IMR-90 (cell line): ENCODE measurements at regions of chr3 and their contacts with region 1.

Region 1: GRCh38 chr3:127002195-127003174 is 19.6 kb downstream of the PLXNA1 start:
- DNase-seq: peak; percentile 89
- ATAC-seq: peak; percentile 92
- H3K4me3 ChIP-seq: no peak overlapping the region
- H3K27ac ChIP-seq: peak overlapping the region; percentile 99
- H3K4me1 ChIP-seq: peaks cover 29% of the 10 kb centered on the region
- H3K27me3 ChIP-seq: no peaks in the 10 kb centered on the region
- CTCF ChIP-seq: peak; percentile 69
- POLR2A ChIP-seq: 0 out of 2 replicates have a peak, but pooled peaks have one; percentile 49
- RAD21 ChIP-seq: peak; percentile 70

Region 2: DNA sequence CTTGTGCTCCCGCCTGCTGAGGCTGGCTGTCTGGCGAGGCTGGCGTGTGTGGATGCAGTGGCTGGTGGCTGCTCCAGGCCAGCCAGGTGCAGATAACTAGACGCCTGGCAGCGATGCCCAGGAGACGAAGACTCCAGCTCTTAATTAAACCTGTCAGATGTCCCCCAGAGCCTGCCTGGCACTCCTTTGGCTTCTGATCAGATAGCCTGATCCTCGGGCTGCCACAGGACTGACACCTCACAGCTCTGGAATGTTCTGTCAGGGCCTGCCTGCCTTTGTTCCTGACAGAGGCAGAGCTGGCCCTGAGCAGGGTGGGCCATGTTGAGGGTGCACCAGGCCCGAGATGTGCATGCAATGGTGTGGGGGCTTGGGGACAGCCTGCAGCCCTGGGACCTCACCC is 17.0 kb after region 1 on chr3:
- CTCF ChIA-PET with region 1: no interaction called
- POLR2A ChIA-PET with region 1: no interaction called
- dilution Hi-C with region 1: no loop called
- in situ Hi-C with region 1: no loop called
- intact Hi-C with region 1: no loop called
- DNase-seq: peak; percentile 45
- ATAC-seq: peak; percentile 80
- H3K4me3 ChIP-seq: no peak overlapping the region
- H3K27ac ChIP-seq: no peak overlapping the region; the same call in 1 of the 2 replicates
- H3K4me1 ChIP-seq: peaks cover 12% of the 10 kb centered on the region
- H3K27me3 ChIP-seq: no peaks in the 10 kb centered on the region
- CTCF ChIP-seq: no peak
- POLR2A ChIP-seq: no peak
- RAD21 ChIP-seq: no peak

Region 3: DNA sequence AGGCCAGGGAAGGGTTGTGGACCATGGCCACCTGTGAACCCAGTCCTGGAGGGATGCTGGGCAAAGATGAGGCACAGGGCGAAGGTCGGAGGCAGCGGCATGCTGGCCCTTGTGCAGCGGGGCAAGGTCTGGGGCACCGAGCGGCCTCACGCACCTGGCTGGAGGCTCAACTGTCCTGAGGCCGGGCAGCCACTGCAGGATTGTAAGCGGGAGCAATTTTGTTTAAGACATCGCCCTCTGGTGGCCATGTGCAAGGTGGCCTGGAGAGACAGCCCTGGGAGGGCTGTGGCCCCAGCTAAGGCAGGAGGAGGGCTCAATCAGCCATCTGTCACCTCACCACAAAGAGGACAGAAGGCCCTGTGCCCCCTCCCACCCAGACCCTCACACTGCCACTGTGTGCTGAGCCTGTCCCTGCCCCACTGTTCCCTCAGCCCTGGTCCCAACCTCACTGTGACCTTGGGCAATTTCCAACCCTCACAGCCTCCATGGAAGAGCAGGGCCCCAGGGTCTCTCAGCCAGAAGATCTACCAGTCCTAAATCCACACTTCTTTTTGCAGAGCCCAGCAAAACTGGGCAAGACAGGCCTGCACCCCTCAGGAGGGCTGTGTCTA is 541.8 kb after region 1 on chr3:
- CTCF ChIA-PET with region 1: no interaction called
- POLR2A ChIA-PET with region 1: no interaction called
- dilution Hi-C with region 1: no loop called
- in situ Hi-C with region 1: no loop called
- intact Hi-C with region 1: loop called (anchors 10 kb)
- DNase-seq: peak; percentile 60
- ATAC-seq: peak; percentile 70
- H3K4me3 ChIP-seq: no peak overlapping the region
- H3K27ac ChIP-seq: no peak overlapping the region
- H3K4me1 ChIP-seq: no peaks in the 10 kb centered on the region; the same call in 1 of the 2 replicates
- H3K27me3 ChIP-seq: peaks cover 25% of the 10 kb centered on the region; the same call in 1 of the 2 replicates
- CTCF ChIP-seq: peak; percentile 69
- POLR2A ChIP-seq: no peak
- RAD21 ChIP-seq: peak; percentile 62